ENCODE measurements at regions of chr1 and their contacts with region 1.

Region 1: DNA sequence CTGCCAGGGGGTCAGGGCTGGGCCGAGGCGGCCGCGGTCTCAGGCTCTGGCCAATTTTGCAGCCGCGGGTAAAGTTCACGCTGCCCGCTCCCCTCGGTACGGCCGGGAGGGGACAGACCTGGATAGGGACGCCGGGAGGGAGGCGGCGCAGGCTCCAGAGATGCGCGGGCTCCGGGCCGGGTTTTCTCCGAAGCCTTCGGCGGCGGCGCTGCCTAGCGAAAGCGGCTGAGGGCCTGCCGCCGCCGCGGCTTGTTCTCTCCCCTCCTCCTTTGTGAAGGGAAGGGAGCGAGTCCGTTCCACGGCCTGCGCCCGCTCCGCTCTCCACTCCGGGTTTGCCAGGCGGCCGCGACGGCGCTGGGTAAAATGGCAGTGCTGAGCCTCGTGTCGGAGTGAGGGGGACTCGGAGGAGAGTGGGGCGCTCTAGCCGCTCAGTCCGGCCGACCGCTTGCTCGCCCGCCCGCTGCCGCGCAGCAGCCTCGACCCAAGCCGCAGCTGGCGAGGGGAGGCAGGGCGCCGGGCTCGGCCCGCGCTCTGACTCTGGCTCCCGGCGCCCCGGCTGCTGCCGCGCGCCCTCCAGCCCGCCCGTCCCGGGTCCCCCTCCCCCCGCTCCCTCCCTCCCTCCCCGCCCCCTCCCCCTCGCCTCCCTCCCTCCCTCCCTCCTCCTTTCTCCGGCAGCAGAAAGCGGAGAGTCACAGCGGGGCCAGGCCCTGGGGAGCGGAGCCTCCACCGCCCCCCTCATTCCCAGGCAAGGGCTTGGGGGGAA is at the start of gene ARID1A:
- DNase-seq: peak; percentile 88
- ATAC-seq: peak; percentile 69
- H3K4me3 ChIP-seq: peak within 1 kb of the TSS; percentile 84 to 96 (median 91)
- H3K27ac ChIP-seq: peak within 1 kb of the TSS; percentile 98
- H3K4me1 ChIP-seq: peaks cover 60% of the 10 kb centered on the region
- H3K27me3 ChIP-seq: no peaks in the 10 kb centered on the region
- CTCF ChIP-seq: peak; percentile 44
- EP300 ChIP-seq: peak in 1 of 2 experiments; percentile 40; a peak in 1 of 4 replicates
- POLR2A ChIP-seq: peak; percentile 77 to 90
- RAD21 ChIP-seq: peak; percentile 84
- total RNA-seq, gene ARID1A: 11.9 and 18.4 TPM in 2 replicates

Region 2: DNA sequence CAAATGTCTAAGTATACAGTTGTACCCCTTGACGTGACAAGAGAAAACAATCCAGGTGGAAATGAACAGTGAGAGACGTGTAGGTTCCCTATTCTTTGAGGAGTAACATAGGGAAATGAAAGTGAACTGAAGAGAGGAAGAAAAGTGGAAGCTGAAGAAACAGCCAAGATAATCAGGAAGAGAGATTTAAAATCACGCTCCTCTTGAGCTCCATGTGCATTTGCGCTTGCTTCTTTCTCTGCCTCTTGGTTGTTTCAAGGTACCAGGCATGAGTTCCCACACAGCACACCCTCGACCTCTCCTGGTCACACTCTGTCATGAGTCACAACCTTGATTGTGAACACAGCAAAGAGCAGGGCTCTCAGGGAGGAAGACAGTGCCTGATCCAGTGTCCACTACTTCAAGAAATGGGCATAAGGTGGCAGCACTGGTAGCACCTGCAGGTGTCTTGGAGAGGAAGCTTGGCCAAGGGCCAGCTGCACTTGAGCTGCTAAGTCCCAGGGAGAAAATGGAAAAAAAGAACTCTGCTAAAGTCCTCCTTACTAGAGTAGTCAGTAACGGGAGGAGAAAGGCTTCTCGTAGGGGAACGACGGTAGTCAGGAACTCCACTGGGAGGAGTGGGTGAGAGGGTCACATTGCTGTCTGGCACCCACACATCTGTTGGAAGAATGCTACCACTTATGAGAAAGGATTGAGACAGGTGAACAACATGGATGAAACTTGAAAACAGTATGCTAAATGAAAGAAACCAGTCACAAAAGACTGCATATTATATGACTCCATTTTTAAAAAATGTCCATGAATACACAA is 18.0 kb before region 1 on chr1:
- CTCF ChIA-PET with region 1: no interaction called
- POLR2A ChIA-PET with region 1: interaction called, 17 read pairs
- in situ Hi-C with region 1: no loop called
- intact Hi-C with region 1: no loop called
- DNase-seq: peak; percentile 61
- ATAC-seq: peak; percentile 99
- H3K4me3 ChIP-seq: 0 out of 6 replicates have a peak overlapping the region, but pooled peaks of 1 of the 3 experiments have one; percentile 11
- H3K27ac ChIP-seq: no peak overlapping the region
- H3K4me1 ChIP-seq: peaks cover 18% of the 10 kb centered on the region
- H3K27me3 ChIP-seq: no peaks in the 10 kb centered on the region
- CTCF ChIP-seq: peak; percentile 85
- EP300 ChIP-seq: no peak
- POLR2A ChIP-seq: no peak
- RAD21 ChIP-seq: peak; percentile 58

Region 3: DNA sequence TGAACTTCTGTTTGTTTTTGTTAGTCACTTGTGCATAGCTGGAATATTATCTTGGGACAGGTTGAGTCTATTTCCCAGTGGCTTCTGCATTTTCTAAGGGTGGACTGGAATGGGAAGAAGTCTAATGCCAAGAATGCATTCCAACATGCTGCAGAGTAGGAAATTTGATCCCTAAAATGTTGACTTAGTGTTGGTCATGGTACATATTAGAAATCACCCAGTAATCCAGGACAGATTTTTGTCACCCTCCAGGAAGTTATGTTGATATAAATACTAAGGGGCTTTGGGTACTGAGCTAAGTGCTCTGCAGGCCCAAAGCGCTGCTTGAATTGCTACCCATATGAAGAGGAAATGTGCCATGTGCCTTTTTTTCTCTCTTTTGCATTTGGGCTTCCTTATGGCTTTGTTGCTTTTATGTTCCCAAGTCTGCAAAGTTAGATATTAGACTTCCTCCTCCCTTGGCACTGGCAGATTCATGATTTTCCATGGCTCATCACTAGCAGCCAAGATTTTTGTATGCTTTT is 10.3 kb after region 1 on chr1:
- CTCF ChIA-PET with region 1: no interaction called
- POLR2A ChIA-PET with region 1: interaction called, 44 read pairs
- in situ Hi-C with region 1: no loop called
- intact Hi-C with region 1: no loop called
- DNase-seq: peak; percentile 81
- ATAC-seq: peak; percentile 63
- H3K4me3 ChIP-seq: peak overlapping the region in 2 of 3 experiments; percentile 11 to 29; a peak in 2 of 6 replicates
- H3K27ac ChIP-seq: peak overlapping the region; percentile 72
- H3K4me1 ChIP-seq: peaks cover 71% of the 10 kb centered on the region
- H3K27me3 ChIP-seq: no peaks in the 10 kb centered on the region
- CTCF ChIP-seq: no peak
- EP300 ChIP-seq: 0 out of 4 replicates have a peak, but pooled peaks of 1 of the 2 experiments have one; percentile 25
- POLR2A ChIP-seq: no peak
- RAD21 ChIP-seq: no peak

Region 4: GRCh38 chr1:26723013-26723991 is 27.8 kb after region 1 on chr1:
- CTCF ChIA-PET with region 1: no interaction called
- POLR2A ChIA-PET with region 1: interaction called, 15 read pairs
- in situ Hi-C with region 1: no loop called
- intact Hi-C with region 1: no loop called
- DNase-seq: peak; percentile 82
- ATAC-seq: peak; percentile 94
- H3K4me3 ChIP-seq: no peak overlapping the region; a peak in 1 of 6 replicates
- H3K27ac ChIP-seq: peak overlapping the region; percentile 61
- H3K4me1 ChIP-seq: peaks cover 79% of the 10 kb centered on the region
- H3K27me3 ChIP-seq: no peaks in the 10 kb centered on the region
- CTCF ChIP-seq: no peak
- EP300 ChIP-seq: no peak
- POLR2A ChIP-seq: no peak
- RAD21 ChIP-seq: no peak

Measured in HepG2 (cell line).